Dendritic cell treated with granulocyte-macrophage colony-stimulating factor and Interleukin-4, amounts not matched to agents 40 ng/mL and 50 ng/mL, for 4 days (primary cell): ENCODE measurements at regions of chr11 and their contacts with region 1.

Region 1: GRCh38 chr11:59283825-59284772 is 71.4 kb upstream of the MPEG1 start:
- H3K4me3 Mint-ChIP-seq: peak overlapping the region; percentile 77
- H3K27ac Mint-ChIP-seq: peak overlapping the region; percentile 78
- H3K4me1 Mint-ChIP-seq: peaks cover 46% of the 10 kb centered on the region
- H3K27me3 Mint-ChIP-seq: peaks cover 2% of the 10 kb centered on the region

Region 2: GRCh38 chr11:59171508-59172322 is 112.4 kb before region 1 on chr11 and contains the start of gene DTX4:
- intact Hi-C with region 1: loop called (anchors 1 kb)
- H3K4me3 Mint-ChIP-seq: peak within 1 kb of the TSS; percentile 72
- H3K27ac Mint-ChIP-seq: peak within 1 kb of the TSS; percentile 28
- H3K4me1 Mint-ChIP-seq: peaks cover 17% of the 10 kb centered on the region
- H3K27me3 Mint-ChIP-seq: peaks cover 24% of the 10 kb centered on the region

Region 3: DNA sequence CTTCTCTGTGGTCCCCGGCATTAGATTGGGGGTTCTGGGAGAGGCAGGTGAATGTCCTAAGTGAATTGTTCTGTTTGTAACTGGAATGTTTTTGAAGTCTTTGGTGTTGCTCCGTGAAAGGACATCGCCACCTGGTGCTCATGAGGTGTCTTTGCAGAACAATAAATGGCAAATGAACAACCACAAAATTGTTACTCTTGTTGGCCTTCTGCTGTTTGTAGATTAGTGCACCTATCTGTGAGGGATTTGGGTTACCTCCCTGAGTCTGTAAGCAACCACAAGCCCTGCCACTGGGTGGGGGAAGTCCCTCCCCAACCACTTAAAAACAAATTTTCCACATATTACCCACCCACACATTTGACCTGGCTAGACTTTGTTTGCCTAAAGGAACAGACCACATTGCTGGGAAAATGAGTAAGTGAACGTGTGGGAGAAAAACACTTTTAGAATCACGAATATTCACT is 76.1 kb before region 1 on chr11:
- intact Hi-C with region 1: loop called (anchors 2 kb)
- H3K4me3 Mint-ChIP-seq: peak overlapping the region; percentile 97
- H3K27ac Mint-ChIP-seq: peak overlapping the region; percentile 95
- H3K4me1 Mint-ChIP-seq: peaks cover 76% of the 10 kb centered on the region
- H3K27me3 Mint-ChIP-seq: no peaks in the 10 kb centered on the region

Region 4: DNA sequence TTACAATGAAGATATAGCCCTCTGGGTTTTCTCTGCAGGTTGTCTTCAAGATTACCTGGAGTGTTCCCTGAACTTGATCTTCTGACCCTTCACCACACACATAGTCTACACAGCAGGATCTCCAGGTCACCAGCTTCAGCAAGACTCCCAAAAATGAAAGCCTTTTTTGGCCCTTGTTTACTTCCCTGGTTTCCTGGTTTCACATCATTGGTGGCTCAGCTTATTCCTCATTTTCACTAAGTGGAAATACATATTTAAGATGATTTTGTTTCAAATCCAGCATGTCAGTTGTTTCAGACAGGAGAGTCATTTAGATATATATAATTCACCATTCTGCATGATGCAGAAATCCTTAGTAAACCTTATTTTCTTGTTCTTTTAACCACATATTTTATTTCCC is 29.8 kb before region 1 on chr11:
- intact Hi-C with region 1: loop called (anchors 1 kb)
- H3K4me3 Mint-ChIP-seq: no peak overlapping the region
- H3K27ac Mint-ChIP-seq: peak overlapping the region; percentile 86
- H3K4me1 Mint-ChIP-seq: peaks cover 61% of the 10 kb centered on the region
- H3K27me3 Mint-ChIP-seq: peaks cover 2% of the 10 kb centered on the region

Region 5: DNA sequence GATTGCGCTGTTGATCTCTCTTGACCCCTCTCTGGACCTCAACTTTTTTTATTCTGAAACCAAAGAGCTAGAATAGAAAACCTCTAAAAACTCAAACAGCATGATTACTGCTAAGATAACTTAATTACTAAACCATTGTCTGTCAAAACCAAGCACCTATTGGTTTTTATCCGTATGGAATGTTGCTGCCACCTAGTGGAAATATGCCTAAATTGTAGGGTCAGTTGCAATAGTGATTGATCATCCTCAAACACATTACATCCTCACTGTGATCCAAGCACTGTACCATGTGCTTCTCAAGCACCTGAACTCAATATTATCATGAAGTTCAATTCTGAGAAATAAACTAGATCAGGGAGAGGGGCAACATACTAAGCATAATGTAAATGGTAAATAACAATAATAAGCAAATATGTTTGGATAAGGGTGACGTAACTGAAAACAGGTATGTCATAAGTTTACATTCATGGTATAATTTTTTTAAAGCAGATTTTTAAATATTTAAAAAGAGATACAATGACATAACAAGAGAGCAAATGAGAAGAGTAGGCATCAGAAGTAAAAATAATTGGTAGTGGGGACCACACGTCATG is 145.9 kb after region 1 on chr11:
- intact Hi-C with region 1: loop called (anchors 5 kb)
- H3K4me3 Mint-ChIP-seq: no peak overlapping the region
- H3K27ac Mint-ChIP-seq: no peak overlapping the region
- H3K4me1 Mint-ChIP-seq: no peaks in the 10 kb centered on the region
- H3K27me3 Mint-ChIP-seq: no peaks in the 10 kb centered on the region